Heart right ventricle (tissue), 16 donors: ENCODE measurements at regions of chr20 and their contacts with region 1.

Region 1: DNA sequence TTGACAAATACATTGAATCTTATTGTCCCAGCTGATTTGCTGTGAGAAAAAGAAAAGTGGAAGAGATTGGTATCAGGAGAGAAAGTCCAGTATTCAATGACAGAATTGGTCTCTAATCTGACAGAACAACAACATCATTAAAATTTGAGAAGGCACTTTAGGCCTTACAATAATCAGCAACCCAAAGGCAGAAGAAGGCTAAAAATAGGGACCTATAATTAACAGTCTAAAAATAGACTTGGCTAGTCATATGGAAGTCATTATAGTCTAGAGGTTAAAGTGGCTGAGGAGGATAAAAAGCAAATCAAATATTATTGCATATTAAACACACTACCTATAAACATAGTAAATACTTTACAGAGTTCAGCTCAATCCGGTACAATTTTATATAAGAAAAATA is 393.6 kb upstream of the JAG1 start:
- DNase-seq: no peak
- ATAC-seq: peak in 6 of 8 donors; percentile 47 to 85 (median 76)
- H3K4me3 ChIP-seq: no peak overlapping the region
- H3K27ac ChIP-seq: peak overlapping the region in 6 of 10 donors; percentile 1 to 66 (median 34)
- H3K4me1 ChIP-seq: peaks cover 0 to 34% (median 20%) of the 10 kb centered on the region in 9 donors
- H3K27me3 ChIP-seq: no peaks in the 10 kb centered on the region
- CTCF ChIP-seq: no peak

Region 2: GRCh38 chr20:10982692-10983091 is 84.7 kb before region 1 on chr20:
- intact Hi-C with region 1: loop called in 2 of 10 experiments (anchors 5 kb)
- DNase-seq: peak; percentile 46 to 78
- ATAC-seq: peak; percentile 92 to 99 (median 96)
- H3K4me3 ChIP-seq: peak overlapping the region in 1 of 10 donors; percentile 5
- H3K27ac ChIP-seq: peak overlapping the region in 7 of 10 donors; percentile 38 to 86 (median 71)
- H3K4me1 ChIP-seq: peaks cover 3 to 49% (median 22%) of the 10 kb centered on the region in 9 donors
- H3K27me3 ChIP-seq: no peaks in the 10 kb centered on the region
- CTCF ChIP-seq: no peak

Region 3: DNA sequence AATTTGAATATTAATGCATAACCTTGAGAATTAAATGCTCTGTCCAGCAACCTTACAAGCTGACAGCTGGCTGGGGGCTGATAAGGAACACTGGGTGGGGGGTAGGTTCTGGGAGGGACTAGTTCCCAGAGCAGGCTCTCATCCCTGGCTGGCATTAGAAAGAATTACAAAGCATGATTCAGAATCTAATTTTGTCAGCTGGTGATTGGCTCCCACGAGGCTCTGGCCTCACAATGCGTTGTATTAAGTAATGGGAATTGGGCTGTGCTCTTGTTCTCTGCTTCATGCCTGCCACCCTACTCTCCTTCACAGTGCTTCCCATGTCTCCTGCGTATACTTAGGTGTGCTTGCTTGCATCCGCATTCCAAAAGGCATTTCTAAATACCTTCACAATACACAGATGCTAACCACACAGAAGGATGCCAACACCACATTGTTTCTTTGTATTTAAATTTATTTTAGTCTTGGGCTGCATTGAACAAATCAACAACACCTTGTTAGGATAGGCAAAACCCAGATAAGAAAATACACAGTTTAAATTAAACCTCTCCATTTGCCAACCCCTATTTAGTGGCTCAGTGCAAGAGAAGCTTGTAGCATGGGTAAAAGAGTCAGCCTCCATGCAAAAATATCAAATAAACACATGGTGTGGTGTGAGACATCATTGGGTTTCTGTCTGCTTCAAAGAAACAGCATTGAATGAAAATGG is 40.9 kb after region 1 on chr20:
- intact Hi-C with region 1: loop called in 1 of 10 experiments (anchors 5 kb)
- DNase-seq: peak; percentile 15 to 64
- ATAC-seq: peak; percentile 88 to 99 (median 98)
- H3K4me3 ChIP-seq: no peak overlapping the region
- H3K27ac ChIP-seq: peak overlapping the region in 6 of 10 donors; percentile 26 to 67 (median 60)
- H3K4me1 ChIP-seq: peaks cover 0 to 25% (median 11%) of the 10 kb centered on the region in 9 donors
- H3K27me3 ChIP-seq: no peaks in the 10 kb centered on the region
- CTCF ChIP-seq: no peak